A549 (cell line): ENCODE measurements at regions of chr16 and their contacts with region 1.

Region 1: DNA sequence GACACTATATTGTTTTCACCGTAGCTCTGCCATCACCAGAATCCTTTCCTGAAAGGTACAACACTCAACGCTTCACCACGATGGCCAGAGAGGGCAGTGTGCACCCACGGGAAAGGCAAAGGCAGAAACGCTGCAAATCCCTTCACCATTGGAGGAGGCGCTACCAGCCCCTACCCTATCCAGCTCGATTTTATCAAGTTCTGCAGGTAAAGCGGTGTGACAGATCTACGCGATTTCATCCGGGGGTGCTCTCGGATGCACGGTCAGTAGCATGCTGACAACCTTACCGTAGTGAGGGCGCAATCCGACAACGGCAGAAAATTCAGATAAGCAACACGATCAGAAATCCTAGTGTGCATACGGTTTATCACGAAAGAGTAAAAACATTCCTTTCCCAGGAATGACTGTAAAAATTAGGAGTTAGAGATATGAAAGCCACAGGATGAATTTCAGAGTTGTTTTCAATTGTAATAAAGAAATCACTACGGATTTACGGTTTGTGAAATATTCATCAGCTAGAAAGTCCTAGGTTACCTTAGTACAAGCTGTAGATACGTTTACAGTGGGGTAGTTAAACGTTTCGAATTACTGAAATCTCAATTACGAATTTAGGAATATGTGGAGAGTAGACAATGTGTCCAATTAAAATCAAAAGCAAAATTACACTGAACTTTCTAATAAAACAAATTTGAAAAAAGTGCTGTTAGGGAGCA is 1.8 kb downstream of the NETO2 start:
- DNase-seq: peak; percentile 82 to 92
- ATAC-seq: peak; percentile 52 to 83; a peak in 5 of 6 replicates
- H3K4me3 ChIP-seq: peak overlapping the region; percentile 69
- H3K27ac ChIP-seq: peak overlapping the region; percentile 95 to 97; a peak in 2 of 6 replicates
- H3K4me1 ChIP-seq: peaks cover 33% of the 10 kb centered on the region
- CTCF ChIP-seq: peak; percentile 90
- EP300 ChIP-seq: no peak
- POLR2A ChIP-seq: no peak
- RAD21 ChIP-seq: peak; percentile 83 to 88

Region 2: DNA sequence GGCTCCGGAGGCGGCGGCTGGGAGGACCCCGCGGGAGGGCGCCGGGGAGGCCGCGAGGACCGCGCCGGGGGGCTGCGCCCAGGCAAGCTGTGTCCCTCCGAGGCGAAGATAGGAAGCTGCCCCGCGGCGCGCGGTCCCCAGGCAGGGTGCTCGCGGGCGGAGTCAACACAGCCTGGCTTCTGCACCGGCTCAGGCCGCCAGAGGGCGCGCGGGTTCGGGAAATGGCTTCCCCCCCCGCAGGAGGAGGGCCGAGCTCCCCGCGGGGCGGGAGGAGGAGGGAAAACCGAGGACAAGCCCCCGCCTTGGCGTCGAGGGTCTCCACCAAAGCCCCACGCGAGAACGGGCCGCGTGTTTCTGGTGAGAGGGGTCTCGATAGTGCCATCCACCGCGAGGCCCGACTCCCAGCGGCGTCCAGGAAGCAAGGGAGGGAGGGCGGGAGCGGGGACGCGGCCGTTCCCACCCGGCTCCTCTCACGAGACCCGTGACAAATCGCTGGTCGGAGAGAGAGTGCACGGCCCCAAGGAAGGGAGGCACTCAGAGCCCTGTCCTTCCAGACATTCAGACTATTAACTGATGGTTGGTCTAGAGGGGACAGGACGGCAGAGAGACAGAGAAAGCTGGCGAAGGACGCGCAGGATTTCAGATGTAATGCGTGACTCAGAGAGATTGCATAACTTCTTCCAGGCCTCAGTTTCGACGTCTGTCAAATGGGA is 104.0 kb before region 1 on chr16:
- CTCF ChIA-PET with region 1: interaction called, 13 read pairs
- POLR2A ChIA-PET with region 1: interaction called, 14 read pairs
- DNase-seq: peak; percentile 79 to 89
- ATAC-seq: peak; percentile 92 to 98
- H3K4me3 ChIP-seq: peak overlapping the region; percentile 62
- H3K27ac ChIP-seq: peak overlapping the region; percentile 82 to 95
- H3K4me1 ChIP-seq: no peaks in the 10 kb centered on the region
- CTCF ChIP-seq: peak; percentile 86
- EP300 ChIP-seq: no peak
- POLR2A ChIP-seq: no peak
- RAD21 ChIP-seq: peak; percentile 73 to 87

Region 3: DNA sequence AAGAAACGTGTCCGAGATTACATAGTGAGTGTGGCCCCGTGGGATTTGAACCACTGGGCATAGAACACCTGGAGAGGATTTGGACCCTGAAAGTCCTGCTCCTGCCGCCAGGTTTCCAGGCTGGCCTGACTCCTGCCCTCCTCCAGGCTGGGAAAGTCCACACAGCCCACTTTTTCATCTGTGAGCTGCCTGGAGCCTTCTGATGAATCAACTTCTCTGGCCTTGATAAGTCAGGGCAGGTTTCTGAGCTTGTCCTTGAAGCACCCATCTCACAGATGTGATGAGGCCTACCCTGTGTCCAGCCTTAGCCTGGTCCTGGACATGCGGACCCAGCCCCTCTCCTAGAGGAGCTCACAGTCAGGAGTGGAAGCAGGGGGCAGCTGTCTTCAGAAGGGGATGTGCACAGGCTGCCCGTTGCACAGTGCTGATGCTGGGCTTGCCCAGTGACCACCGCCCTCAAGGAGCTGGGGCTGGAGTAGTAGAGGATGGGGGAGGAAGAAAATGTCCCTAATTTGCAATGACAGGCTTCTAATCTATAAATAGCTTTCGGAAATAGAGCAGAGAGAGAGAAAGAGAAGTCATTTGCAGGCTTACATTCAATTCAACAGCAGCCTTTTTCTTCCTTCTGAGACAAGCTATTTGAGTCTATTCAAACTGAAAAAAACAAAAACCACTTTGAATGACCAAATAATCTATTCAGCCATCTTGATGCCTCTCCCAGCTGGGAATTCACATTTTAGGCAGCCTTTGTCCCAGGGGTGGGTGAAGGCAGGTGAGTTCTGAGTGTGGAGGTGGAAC is 95.0 kb before region 1 on chr16:
- CTCF ChIA-PET with region 1: interaction called, 12 read pairs
- POLR2A ChIA-PET with region 1: no interaction called
- DNase-seq: no peak
- ATAC-seq: no peak
- H3K4me3 ChIP-seq: no peak overlapping the region
- H3K27ac ChIP-seq: no peak overlapping the region
- H3K4me1 ChIP-seq: no peaks in the 10 kb centered on the region
- CTCF ChIP-seq: no peak
- EP300 ChIP-seq: no peak
- POLR2A ChIP-seq: no peak
- RAD21 ChIP-seq: no peak

Region 4: GRCh38 chr16:47125757-47126156 is 16.2 kb before region 1 on chr16:
- CTCF ChIA-PET with region 1: interaction called, 36 read pairs
- POLR2A ChIA-PET with region 1: no interaction called
- DNase-seq: no peak
- ATAC-seq: no peak
- H3K4me3 ChIP-seq: no peak overlapping the region
- H3K27ac ChIP-seq: no peak overlapping the region
- H3K4me1 ChIP-seq: no peaks in the 10 kb centered on the region
- CTCF ChIP-seq: no peak
- EP300 ChIP-seq: no peak
- POLR2A ChIP-seq: no peak
- RAD21 ChIP-seq: no peak

Region 5: GRCh38 chr16:47342055-47342454 is 200.1 kb after region 1 on chr16:
- CTCF ChIA-PET with region 1: no interaction called
- POLR2A ChIA-PET with region 1: no interaction called
- DNase-seq: no peak
- ATAC-seq: no peak
- H3K4me3 ChIP-seq: no peak overlapping the region
- H3K27ac ChIP-seq: no peak overlapping the region
- H3K4me1 ChIP-seq: no peaks in the 10 kb centered on the region
- CTCF ChIP-seq: no peak
- EP300 ChIP-seq: no peak
- POLR2A ChIP-seq: no peak
- RAD21 ChIP-seq: no peak

Region 6: GRCh38 chr16:47460711-47461597 is 319.0 kb after region 1 on chr16 and contains the starts of genes ITFG1 and PHKB:
- CTCF ChIA-PET with region 1: interaction called, 10 read pairs
- POLR2A ChIA-PET with region 1: interaction called, 8 read pairs
- DNase-seq: peak; percentile 56 to 94
- ATAC-seq: peak; percentile 83 to 90
- H3K4me3 ChIP-seq: peak within 1 kb of the TSS; percentile 80
- H3K27ac ChIP-seq: peak within 1 kb of the TSS; percentile 94 to 97
- H3K4me1 ChIP-seq: peaks cover 17% of the 10 kb centered on the region
- CTCF ChIP-seq: no peak
- EP300 ChIP-seq: no peak
- POLR2A ChIP-seq: peak; percentile 66
- RAD21 ChIP-seq: 0 out of 5 replicates have a peak, but pooled peaks have one; percentile 6 to 12
- polyA plus RNA-seq, gene ITFG1: 112 and 124 TPM in 2 replicates
- polyA plus RNA-seq, gene PHKB: 81.1 and 96.8 TPM in 2 replicates